ENCODE measurements at regions of chr9 and their contacts with region 1.

Region 1: DNA sequence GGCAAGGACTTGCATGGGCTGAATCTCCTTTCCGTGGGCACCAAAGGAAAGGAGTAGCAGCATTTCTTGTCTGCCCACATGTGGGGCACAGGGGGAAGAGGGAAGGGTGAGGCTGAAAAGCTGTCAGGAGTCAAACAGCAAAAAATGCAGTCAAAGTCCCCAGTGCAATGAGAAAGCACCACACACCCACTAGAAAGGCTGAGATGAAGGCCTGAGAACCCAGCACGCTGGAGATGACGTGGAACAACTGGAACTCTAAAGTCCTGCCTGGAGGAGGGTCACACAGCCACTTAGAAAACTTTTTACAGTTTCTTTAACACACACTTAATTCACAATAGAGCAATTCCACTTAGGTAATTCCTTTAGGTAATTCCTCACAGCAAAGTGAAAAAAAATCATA is 94.6 kb upstream of the IGFBPL1 start:
- DNase-seq: no peak
- ATAC-seq: no peak
- H3K4me3 ChIP-seq: no peak overlapping the region
- H3K27ac ChIP-seq: no peak overlapping the region
- H3K4me1 ChIP-seq: no peaks in the 10 kb centered on the region
- H3K27me3 ChIP-seq: no peaks in the 10 kb centered on the region
- CTCF ChIP-seq: no peak
- EP300 ChIP-seq: no peak
- POLR2A ChIP-seq: no peak
- RAD21 ChIP-seq: no peak

Region 2: GRCh38 chr9:38026021-38026809 is 492.6 kb before region 1 on chr9:
- CTCF ChIA-PET with region 1: no interaction called
- POLR2A ChIA-PET with region 1: no interaction called
- RAD21 ChIA-PET with region 1: no interaction called
- SMC1A ChIA-PET with region 1: no interaction called
- in situ Hi-C with region 1: no loop called
- intact Hi-C with region 1: no loop called
- DNase-seq: no peak
- ATAC-seq: no peak
- H3K4me3 ChIP-seq: no peak overlapping the region
- H3K27ac ChIP-seq: no peak overlapping the region
- H3K4me1 ChIP-seq: peaks cover 5% of the 10 kb centered on the region; the same call in 1 of the 2 replicates
- H3K27me3 ChIP-seq: no peaks in the 10 kb centered on the region
- CTCF ChIP-seq: no peak
- EP300 ChIP-seq: no peak
- POLR2A ChIP-seq: no peak
- RAD21 ChIP-seq: no peak

Region 3: DNA sequence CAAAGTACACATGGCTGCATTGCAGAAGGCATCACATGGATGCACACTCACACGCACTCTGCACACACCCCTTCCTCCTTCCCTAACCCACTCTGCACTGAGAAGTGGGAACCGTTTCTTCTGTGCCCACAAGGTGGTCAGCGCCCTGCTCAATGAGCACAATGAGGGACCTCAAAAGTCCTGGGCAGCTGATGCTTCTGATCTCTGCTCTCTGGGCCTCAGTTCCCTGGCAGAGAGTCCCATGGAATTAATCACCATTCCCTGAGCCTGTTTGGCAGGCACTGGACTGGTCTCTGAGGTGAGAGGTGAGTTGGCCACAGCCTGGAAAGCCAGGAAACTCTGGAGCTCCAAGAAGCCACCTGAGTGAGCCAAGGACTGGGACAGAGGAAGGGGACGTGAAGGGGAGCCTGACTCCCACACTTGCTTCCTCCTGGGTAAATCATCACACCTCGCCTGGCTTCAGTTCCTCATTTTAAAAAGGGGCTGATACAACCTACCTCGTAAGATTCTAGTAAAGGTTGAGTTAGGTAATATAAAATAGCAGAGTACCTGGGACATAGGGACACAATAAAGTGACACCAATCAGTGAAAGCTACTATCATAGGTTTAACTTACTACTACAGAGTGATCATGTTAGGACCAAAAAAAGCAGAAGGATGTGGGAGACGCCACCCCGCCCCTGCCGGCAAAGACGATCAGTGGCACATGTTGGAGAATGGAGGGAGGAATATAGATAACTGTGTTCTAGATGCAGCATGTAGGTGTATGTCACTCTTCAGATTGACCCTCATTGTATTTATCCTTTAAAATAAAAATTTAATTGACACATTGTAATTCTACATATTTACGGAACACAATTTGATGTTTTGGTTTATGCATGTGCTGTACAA is 73.4 kb before region 1 on chr9:
- CTCF ChIA-PET with region 1: no interaction called
- POLR2A ChIA-PET with region 1: no interaction called
- RAD21 ChIA-PET with region 1: no interaction called
- SMC1A ChIA-PET with region 1: no interaction called
- in situ Hi-C with region 1: no loop called
- intact Hi-C with region 1: loop called (anchors 10 kb)
- DNase-seq: no peak
- ATAC-seq: peak; percentile 97
- H3K4me3 ChIP-seq: no peak overlapping the region
- H3K27ac ChIP-seq: no peak overlapping the region
- H3K4me1 ChIP-seq: peaks cover 4% of the 10 kb centered on the region; the same call in 1 of the 2 replicates
- H3K27me3 ChIP-seq: no peaks in the 10 kb centered on the region; a peak in 1 of 4 replicates
- CTCF ChIP-seq: no peak
- EP300 ChIP-seq: 0 out of 4 replicates have a peak, but pooled peaks of 1 of the 2 experiments have one; percentile 53
- POLR2A ChIP-seq: no peak
- RAD21 ChIP-seq: no peak

Region 4: GRCh38 chr9:38486056-38486615 is 32.7 kb before region 1 on chr9:
- CTCF ChIA-PET with region 1: no interaction called
- POLR2A ChIA-PET with region 1: no interaction called
- RAD21 ChIA-PET with region 1: no interaction called
- SMC1A ChIA-PET with region 1: no interaction called
- in situ Hi-C with region 1: no loop called
- intact Hi-C with region 1: no loop called
- DNase-seq: no peak
- ATAC-seq: no peak
- H3K4me3 ChIP-seq: no peak overlapping the region
- H3K27ac ChIP-seq: no peak overlapping the region
- H3K4me1 ChIP-seq: no peaks in the 10 kb centered on the region
- H3K27me3 ChIP-seq: no peaks in the 10 kb centered on the region
- CTCF ChIP-seq: no peak
- EP300 ChIP-seq: no peak
- POLR2A ChIP-seq: no peak
- RAD21 ChIP-seq: no peak